ENCODE measurements at regions of chr12 and their contacts with region 1.

Region 1: GRCh38 chr12:61272361-61272760 is 987.8 kb upstream of the USP15 start:
- DNase-seq: peak; percentile 23
- H3K4me3 Mint-ChIP-seq: no peak overlapping the region
- H3K27ac Mint-ChIP-seq: peak overlapping the region; percentile 86
- H3K4me1 Mint-ChIP-seq: peaks cover 10% of the 10 kb centered on the region
- H3K27me3 Mint-ChIP-seq: no peaks in the 10 kb centered on the region
- CTCF ChIP-seq: no peak

Region 2: DNA sequence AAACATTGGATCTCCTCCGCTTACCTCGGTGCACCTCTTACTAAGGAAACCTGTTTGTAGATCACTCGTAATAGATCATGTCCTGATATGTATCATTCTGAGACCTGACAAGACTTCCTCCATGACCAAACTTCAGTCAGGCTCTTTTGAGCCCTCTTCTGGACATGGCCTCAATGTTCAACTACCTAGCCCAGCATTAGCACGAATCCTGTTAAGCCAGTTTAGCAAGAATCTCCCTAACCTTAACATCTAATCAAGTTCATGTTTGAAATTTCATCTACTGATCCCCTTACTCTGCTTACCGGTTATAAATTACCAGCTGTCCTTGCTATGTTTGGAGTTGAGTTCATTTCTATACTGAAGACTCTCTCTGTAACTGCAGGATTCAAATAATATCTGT is 274.0 kb after region 1 on chr12:
- CTCF ChIA-PET with region 1: no interaction called
- intact Hi-C with region 1: loop called (anchors 10 kb)
- DNase-seq: peak; percentile 52
- H3K4me3 Mint-ChIP-seq: no peak overlapping the region
- H3K27ac Mint-ChIP-seq: no peak overlapping the region
- H3K4me1 Mint-ChIP-seq: peaks cover 7% of the 10 kb centered on the region
- H3K27me3 Mint-ChIP-seq: no peaks in the 10 kb centered on the region
- CTCF ChIP-seq: peak; percentile 30

Measured in Calu3 (cell line).